ENCODE measurements at regions of chr13 and their contacts with region 1.

Region 1: GRCh38 chr13:21181671-21182070 is 5.2 kb downstream of the MRPL57 start:
- DNase-seq: no peak
- H3K4me3 ChIP-seq: no peak overlapping the region
- H3K27ac ChIP-seq: no peak overlapping the region
- H3K4me1 ChIP-seq: peaks cover 8% of the 10 kb centered on the region
- H3K27me3 ChIP-seq: no peaks in the 10 kb centered on the region
- CTCF ChIP-seq: no peak

Region 2: DNA sequence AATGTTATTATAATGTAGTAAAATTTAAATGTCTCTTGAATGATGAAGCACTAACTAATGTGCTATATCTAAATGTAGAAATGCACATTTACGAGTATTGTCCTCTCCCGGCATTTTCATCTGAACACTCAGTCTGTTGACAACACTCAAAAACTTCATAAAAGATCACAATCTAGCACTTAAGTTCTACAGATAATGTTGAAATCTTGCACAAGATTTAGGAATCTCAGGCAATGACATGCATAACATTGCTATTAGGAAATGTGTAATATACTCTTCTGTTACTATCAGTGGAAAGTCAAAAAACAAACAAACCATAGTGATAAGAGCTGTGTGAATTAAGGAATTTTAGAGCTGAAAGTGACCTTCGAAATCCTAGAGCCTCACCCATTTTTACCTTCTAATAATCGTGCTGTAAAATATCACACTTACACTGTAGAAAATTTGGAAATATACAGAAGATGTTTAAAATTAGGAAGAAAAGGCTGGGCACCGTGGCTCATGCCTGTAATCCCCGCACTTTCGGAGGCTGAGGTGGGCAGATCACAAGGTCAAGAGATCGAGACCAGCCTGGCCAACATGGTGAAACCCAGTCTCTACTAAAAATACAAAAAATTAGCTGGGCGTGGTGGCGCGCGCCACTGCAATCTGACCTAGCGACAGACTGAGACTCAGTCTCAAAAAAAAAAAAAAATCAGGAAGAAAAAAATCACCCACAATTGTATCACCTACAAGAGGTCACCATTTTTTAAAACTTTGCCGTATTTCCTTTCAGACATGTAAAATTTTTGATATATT is 241.4 kb before region 1 on chr13:
- intact Hi-C with region 1: loop called (anchors 5 kb)
- DNase-seq: no peak
- H3K4me3 ChIP-seq: no peak overlapping the region
- H3K27ac ChIP-seq: no peak overlapping the region
- H3K4me1 ChIP-seq: peaks cover 5% of the 10 kb centered on the region
- H3K27me3 ChIP-seq: no peaks in the 10 kb centered on the region
- CTCF ChIP-seq: no peak

Region 3: GRCh38 chr13:21282065-21282464 is 100.4 kb after region 1 on chr13:
- intact Hi-C with region 1: no loop called
- DNase-seq: no peak
- H3K4me3 ChIP-seq: no peak overlapping the region
- H3K27ac ChIP-seq: no peak overlapping the region
- H3K4me1 ChIP-seq: no peaks in the 10 kb centered on the region
- H3K27me3 ChIP-seq: no peaks in the 10 kb centered on the region
- CTCF ChIP-seq: no peak

Measured in colonic mucosa (tissue), 4 donors.